ENCODE measurements at regions of chr3 and their contacts with region 1.

Region 1: DNA sequence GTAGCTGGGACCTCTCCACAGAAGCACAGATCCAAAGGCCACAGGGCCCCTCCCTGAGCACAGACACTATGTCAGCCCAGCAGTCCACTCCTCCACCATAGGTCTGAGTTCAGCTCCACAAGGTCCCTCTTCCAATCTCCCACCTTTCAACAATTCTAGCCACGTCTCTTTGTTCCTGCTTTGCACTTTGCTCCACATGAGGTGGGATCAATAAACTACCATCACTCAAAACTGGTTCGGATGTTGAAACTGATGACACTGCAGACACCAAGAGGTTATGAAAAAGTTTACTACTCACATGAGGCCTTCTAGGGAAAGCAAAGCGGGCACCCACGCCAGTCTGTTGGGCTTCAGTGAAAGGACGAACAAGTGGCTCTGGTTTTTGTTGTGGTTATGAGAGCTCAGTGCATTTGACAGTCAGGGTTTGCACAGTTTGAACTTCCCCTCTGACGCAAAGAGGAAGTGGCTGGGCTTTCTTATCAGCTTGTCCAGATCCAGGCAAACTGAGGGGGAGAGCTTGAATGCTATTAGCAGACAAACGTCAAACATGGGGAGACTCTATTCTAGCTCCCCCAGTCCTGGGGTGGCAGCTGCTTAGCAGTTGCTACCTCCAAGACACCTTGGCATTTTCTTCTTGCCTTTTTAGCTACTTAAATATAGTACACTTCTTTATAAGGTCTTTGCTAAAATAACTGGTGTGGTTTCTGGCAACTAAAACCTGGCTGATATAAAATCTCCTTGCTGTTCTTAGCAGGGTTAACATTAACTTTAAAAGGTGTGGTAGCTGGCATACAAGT is 37.8 kb downstream of the ZNF445 start:
- DNase-seq: peak; percentile 10 to 88 (median 44)
- ATAC-seq: peak; percentile 81
- H3K4me3 ChIP-seq: no peak overlapping the region
- H3K4me3 Mint-ChIP-seq: peak overlapping the region; percentile 75
- H3K27ac ChIP-seq: peak overlapping the region; percentile 54 to 80
- H3K27ac Mint-ChIP-seq: peak overlapping the region; percentile 84
- H3K4me1 ChIP-seq: peaks cover 30% of the 10 kb centered on the region
- H3K4me1 Mint-ChIP-seq: peaks cover 39% of the 10 kb centered on the region
- H3K27me3 ChIP-seq: no peaks in the 10 kb centered on the region
- H3K27me3 Mint-ChIP-seq: no peaks in the 10 kb centered on the region
- CTCF ChIP-seq: no peak

Region 2: DNA sequence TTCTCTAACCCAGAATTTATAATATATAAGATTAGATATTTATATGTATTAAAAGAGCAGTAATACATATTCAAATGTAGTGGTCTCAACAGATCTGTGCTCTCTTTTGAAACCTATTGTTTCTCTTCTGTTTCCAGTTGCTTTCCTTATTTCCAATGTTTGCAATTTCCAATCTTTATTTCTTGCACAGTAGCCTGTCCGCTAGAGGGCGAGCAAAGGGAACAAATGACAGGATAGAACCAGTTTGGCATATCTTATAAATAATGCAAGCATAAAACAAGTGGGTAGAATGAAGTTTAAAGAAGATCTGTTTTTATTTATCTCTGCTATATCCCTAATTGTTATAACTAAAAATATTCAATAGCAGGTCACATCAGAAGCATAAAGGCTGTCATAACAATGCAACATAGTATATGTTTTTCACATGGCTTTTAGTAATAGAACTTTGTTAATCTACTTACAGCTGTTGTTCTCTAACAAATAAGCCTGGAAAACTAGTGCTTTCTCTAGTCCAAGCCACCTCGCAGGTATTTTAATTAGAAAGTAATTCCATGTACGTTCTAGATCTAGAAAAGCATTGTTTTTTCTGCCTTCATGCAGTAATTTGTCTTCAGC is 116.2 kb before region 1 on chr3:
- CTCF ChIA-PET with region 1: no interaction called
- POLR2A ChIA-PET with region 1: no interaction called
- intact Hi-C with region 1: loop called in 1 of 2 experiments (anchors 10 kb)
- DNase-seq: peak; percentile 20 to 72 (median 48)
- ATAC-seq: no peak
- H3K4me3 ChIP-seq: no peak overlapping the region
- H3K4me3 Mint-ChIP-seq: no peak overlapping the region
- H3K27ac ChIP-seq: no peak overlapping the region
- H3K27ac Mint-ChIP-seq: no peak overlapping the region
- H3K4me1 ChIP-seq: peaks cover 3% of the 10 kb centered on the region
- H3K4me1 Mint-ChIP-seq: no peaks in the 10 kb centered on the region
- H3K27me3 ChIP-seq: no peaks in the 10 kb centered on the region
- H3K27me3 Mint-ChIP-seq: peaks cover 10% of the 10 kb centered on the region
- CTCF ChIP-seq: peak; percentile 90

Region 3: GRCh38 chr3:44477312-44478030 is 37.8 kb after region 1 on chr3 and contains the start of gene ZNF445:
- CTCF ChIA-PET with region 1: no interaction called
- POLR2A ChIA-PET with region 1: interaction called, 3 read pairs
- intact Hi-C with region 1: loop called in 1 of 2 experiments (anchors 5 kb)
- DNase-seq: peak; percentile 53 to 90 (median 72)
- ATAC-seq: peak; percentile 87
- H3K4me3 ChIP-seq: peak within 1 kb of the TSS; percentile 65
- H3K4me3 Mint-ChIP-seq: peak within 1 kb of the TSS; percentile 97
- H3K27ac ChIP-seq: peak within 1 kb of the TSS in 1 of 2 donors; percentile 56
- H3K27ac Mint-ChIP-seq: peak within 1 kb of the TSS; percentile 93
- H3K4me1 ChIP-seq: peaks cover 19% of the 10 kb centered on the region
- H3K4me1 Mint-ChIP-seq: peaks cover 39% of the 10 kb centered on the region
- H3K27me3 ChIP-seq: no peaks in the 10 kb centered on the region
- H3K27me3 Mint-ChIP-seq: no peaks in the 10 kb centered on the region
- CTCF ChIP-seq: no peak
- total RNA-seq, gene ZNF445: 6.1 to 6.6 TPM

Measured in CD4-positive, alpha-beta T cell (primary cell).